GM12878 (cell line): ENCODE measurements at regions of chr12 and their contacts with region 1.

Region 1: GRCh38 chr12:56468216-56469006 is at the start of gene SPRYD4:
- DNase-seq: peak; percentile 70
- ATAC-seq: peak; percentile 92
- H3K4me3 ChIP-seq: peak within 1 kb of the TSS; percentile 76
- H3K27ac ChIP-seq: peak within 1 kb of the TSS; percentile 93
- H3K4me1 ChIP-seq: peaks cover 15% of the 10 kb centered on the region
- H3K27me3 ChIP-seq: no peaks in the 10 kb centered on the region
- CTCF ChIP-seq: peak; percentile 22 to 68 (median 27); a peak in 4 of 6 replicates
- EP300 ChIP-seq: no peak
- POLR2A ChIP-seq: peak; percentile 95
- RAD21 ChIP-seq: no peak
- polyA plus RNA-seq, gene SPRYD4: 4.8 to 6.0 TPM

Region 2: GRCh38 chr12:56224102-56224701 is 244.2 kb before region 1 on chr12 and contains the start of gene NABP2:
- CTCF ChIA-PET with region 1: interaction called, 5 read pairs
- POLR2A ChIA-PET with region 1: interaction called, 12 read pairs
- RAD21 ChIA-PET with region 1: interaction called, 11 read pairs
- SMC1A ChIA-PET with region 1: interaction called, 6 read pairs
- in situ Hi-C with region 1: no loop called
- intact Hi-C with region 1: no loop called
- DNase-seq: peak; percentile 89
- ATAC-seq: peak; percentile 90
- H3K4me3 ChIP-seq: peak within 1 kb of the TSS; percentile 97
- H3K27ac ChIP-seq: peak within 1 kb of the TSS; percentile 65
- H3K4me1 ChIP-seq: 0 out of 2 replicates have a peak, but pooled peaks cover 3% of the 10 kb centered on the region
- H3K27me3 ChIP-seq: no peaks in the 10 kb centered on the region
- CTCF ChIP-seq: peak; percentile 65 to 86 (median 85)
- EP300 ChIP-seq: 0 out of 4 replicates have a peak, but pooled peaks of 1 of the 2 experiments have one; percentile 7
- POLR2A ChIP-seq: peak; percentile 78
- RAD21 ChIP-seq: peak; percentile 49; the same call in 1 of the 2 replicates
- polyA plus RNA-seq, gene NABP2: 20.7 to 29.5 TPM

Region 3: DNA sequence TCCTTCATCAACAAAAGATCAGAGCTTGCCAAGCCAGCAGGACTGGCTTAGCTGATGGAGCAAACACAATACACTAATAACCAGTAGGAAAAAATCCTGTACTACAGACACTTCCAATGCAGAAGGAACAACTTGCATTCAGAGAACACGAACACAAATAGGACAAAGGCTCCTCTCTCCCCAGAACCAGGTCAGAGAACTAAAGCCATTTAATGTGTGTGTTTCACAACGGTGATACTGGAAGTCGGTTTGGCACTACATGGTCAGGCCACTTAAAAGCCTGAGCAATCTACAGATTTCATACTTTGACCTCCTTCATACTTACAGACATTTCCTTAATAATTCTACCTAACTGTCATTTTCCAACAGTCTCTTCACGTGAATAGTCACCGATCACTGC is 174.6 kb before region 1 on chr12:
- CTCF ChIA-PET with region 1: interaction called, 10 read pairs
- POLR2A ChIA-PET with region 1: interaction called, 6 read pairs
- RAD21 ChIA-PET with region 1: interaction called, 4 read pairs
- SMC1A ChIA-PET with region 1: interaction called, 14 read pairs
- in situ Hi-C with region 1: no loop called
- intact Hi-C with region 1: no loop called
- DNase-seq: no peak
- ATAC-seq: no peak
- H3K4me3 ChIP-seq: no peak overlapping the region
- H3K27ac ChIP-seq: no peak overlapping the region
- H3K4me1 ChIP-seq: peaks cover 20% of the 10 kb centered on the region
- H3K27me3 ChIP-seq: no peaks in the 10 kb centered on the region
- CTCF ChIP-seq: no peak
- EP300 ChIP-seq: no peak
- POLR2A ChIP-seq: no peak
- RAD21 ChIP-seq: no peak

Region 4: DNA sequence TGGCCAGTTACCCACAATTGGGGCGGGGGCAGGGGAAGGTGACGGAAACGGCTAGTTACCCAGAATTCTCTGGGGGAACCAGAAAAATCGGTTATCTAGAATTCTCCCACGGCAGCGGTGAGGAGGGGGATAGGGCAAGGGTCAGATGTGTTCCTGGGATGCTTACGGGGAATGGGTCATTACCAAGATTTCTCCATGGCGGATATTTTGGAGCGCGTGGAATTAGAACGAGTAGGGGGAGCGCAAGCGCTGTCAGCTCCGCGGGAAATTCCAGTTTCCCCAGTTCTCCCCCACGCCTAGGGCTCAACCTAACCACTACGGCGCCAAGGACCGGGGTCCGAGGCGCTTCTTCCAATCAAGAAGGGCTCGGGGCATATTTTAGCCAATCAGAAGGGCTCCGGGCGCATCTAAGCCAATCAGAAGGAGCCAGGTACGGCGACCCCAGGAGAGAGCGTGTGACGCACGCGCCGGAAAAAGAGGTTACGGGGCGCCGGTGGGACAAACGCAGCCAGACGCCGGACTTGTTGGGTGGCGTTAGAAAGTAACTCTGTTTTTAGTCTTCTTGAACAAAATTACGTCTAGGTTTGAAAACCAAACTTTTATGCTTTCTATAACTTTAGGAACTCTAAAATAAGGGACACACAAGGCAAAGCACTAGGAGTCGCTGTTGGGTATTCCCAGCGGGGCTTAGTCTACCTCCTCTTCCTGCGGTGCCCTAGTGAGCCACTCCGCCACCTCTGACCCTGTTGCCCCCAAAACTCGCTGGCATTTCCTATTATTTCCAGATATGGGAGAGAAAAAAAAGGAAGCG is 134.5 kb before region 1 on chr12 and contains the start of gene PAN2:
- CTCF ChIA-PET with region 1: interaction called, 7 read pairs
- POLR2A ChIA-PET with region 1: interaction called, 5 read pairs
- RAD21 ChIA-PET with region 1: interaction called, 8 read pairs
- SMC1A ChIA-PET with region 1: interaction called, 12 read pairs
- in situ Hi-C with region 1: no loop called
- intact Hi-C with region 1: loop called (anchors 5 kb)
- DNase-seq: peak; percentile 89
- ATAC-seq: peak; percentile 97
- H3K4me3 ChIP-seq: peak within 1 kb of the TSS; percentile 97
- H3K27ac ChIP-seq: peak within 1 kb of the TSS; percentile 99
- H3K4me1 ChIP-seq: peaks cover 24% of the 10 kb centered on the region
- H3K27me3 ChIP-seq: no peaks in the 10 kb centered on the region
- CTCF ChIP-seq: peak; percentile 37 to 47 (median 43); a peak in 5 of 6 replicates
- EP300 ChIP-seq: 0 out of 4 replicates have a peak, but pooled peaks have one; percentile 6 to 29
- POLR2A ChIP-seq: peak; percentile 73
- RAD21 ChIP-seq: peak; percentile 33; the same call in 1 of the 2 replicates
- polyA plus RNA-seq, gene PAN2: 14.4 to 14.5 TPM

Region 5: DNA sequence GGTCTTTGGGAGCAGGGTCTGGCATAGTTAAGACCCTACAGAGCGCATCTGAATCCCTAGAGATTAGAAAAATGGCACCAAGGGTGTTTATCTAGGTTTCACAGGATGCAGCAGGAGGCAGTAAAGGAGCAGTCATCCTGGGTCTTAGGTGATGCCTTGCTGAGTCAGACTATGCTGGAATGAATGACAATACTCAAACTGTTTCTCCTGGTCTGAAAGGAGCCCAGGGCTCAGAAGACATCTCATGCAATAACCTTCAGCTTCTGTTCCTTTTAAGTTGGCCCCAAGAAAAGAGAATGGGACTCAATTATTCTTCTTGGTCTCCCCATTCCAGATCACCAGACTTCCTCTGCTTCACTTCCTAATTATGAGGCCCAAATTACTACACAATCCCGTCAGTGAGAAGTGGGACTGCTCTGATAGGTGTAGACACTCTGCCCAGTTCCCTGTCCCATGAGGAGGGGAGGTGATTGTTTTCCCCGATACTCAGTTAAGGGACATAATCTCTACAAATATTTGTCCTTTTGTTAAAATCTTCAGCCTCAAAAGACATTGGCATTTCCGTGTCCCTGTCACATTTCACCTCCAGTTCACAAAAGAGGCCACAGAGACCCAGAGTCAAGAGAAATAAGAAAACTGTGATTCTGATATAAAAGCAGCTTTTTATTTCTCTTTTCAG is 91.0 kb before region 1 on chr12:
- CTCF ChIA-PET with region 1: interaction called, 18 read pairs
- POLR2A ChIA-PET with region 1: no interaction called
- RAD21 ChIA-PET with region 1: interaction called, 5 read pairs
- SMC1A ChIA-PET with region 1: interaction called, 10 read pairs
- in situ Hi-C with region 1: no loop called
- intact Hi-C with region 1: no loop called
- DNase-seq: no peak
- ATAC-seq: no peak
- H3K4me3 ChIP-seq: no peak overlapping the region
- H3K27ac ChIP-seq: peak overlapping the region; percentile 25; the same call in 1 of the 2 replicates
- H3K4me1 ChIP-seq: peaks cover 36% of the 10 kb centered on the region
- H3K27me3 ChIP-seq: no peaks in the 10 kb centered on the region
- CTCF ChIP-seq: peak in 1 of 3 experiments; percentile 10; a peak in 1 of 6 replicates
- EP300 ChIP-seq: no peak
- POLR2A ChIP-seq: no peak
- RAD21 ChIP-seq: peak; percentile 46

Region 6: GRCh38 chr12:57101844-57102695 is 633.7 kb after region 1 on chr12:
- CTCF ChIA-PET with region 1: no interaction called
- POLR2A ChIA-PET with region 1: no interaction called
- RAD21 ChIA-PET with region 1: no interaction called
- SMC1A ChIA-PET with region 1: no interaction called
- in situ Hi-C with region 1: no loop called
- intact Hi-C with region 1: no loop called
- DNase-seq: no peak
- ATAC-seq: peak; percentile 7; the same call in 1 of the 3 replicates
- H3K4me3 ChIP-seq: no peak overlapping the region
- H3K27ac ChIP-seq: no peak overlapping the region
- H3K4me1 ChIP-seq: no peaks in the 10 kb centered on the region; the same call in 1 of the 2 replicates
- H3K27me3 ChIP-seq: no peaks in the 10 kb centered on the region
- CTCF ChIP-seq: no peak
- EP300 ChIP-seq: no peak
- POLR2A ChIP-seq: 0 out of 2 replicates have a peak, but pooled peaks have one; percentile 21
- RAD21 ChIP-seq: no peak